Sigmoid colon (tissue), 7 donors: ENCODE measurements at regions of chr20 and their contacts with region 1.

Region 1: GRCh38 chr20:4108495-4109306 is 93.3 kb upstream of the RNF24 start:
- DNase-seq: peak; percentile 79
- H3K4me3 ChIP-seq: no peak overlapping the region
- H3K27ac ChIP-seq: no peak overlapping the region
- H3K4me1 ChIP-seq: peaks cover 0 to 13% (median 0%) of the 10 kb centered on the region in 4 donors
- H3K27me3 ChIP-seq: peaks cover 0 to 2% (median 0%) of the 10 kb centered on the region in 3 donors
- CTCF ChIP-seq: peak; percentile 94 to 96 (median 94)
- EP300 ChIP-seq: no peak
- POLR2A ChIP-seq: no peak

Region 2: GRCh38 chr20:4435225-4435624 is 326.5 kb after region 1 on chr20:
- intact Hi-C with region 1: no loop called
- DNase-seq: no peak
- H3K4me3 ChIP-seq: no peak overlapping the region
- H3K27ac ChIP-seq: no peak overlapping the region
- H3K4me1 ChIP-seq: peaks cover 0 to 6% (median 0%) of the 10 kb centered on the region in 4 donors
- H3K27me3 ChIP-seq: no peaks in the 10 kb centered on the region
- CTCF ChIP-seq: no peak
- EP300 ChIP-seq: no peak
- POLR2A ChIP-seq: no peak

Region 3: DNA sequence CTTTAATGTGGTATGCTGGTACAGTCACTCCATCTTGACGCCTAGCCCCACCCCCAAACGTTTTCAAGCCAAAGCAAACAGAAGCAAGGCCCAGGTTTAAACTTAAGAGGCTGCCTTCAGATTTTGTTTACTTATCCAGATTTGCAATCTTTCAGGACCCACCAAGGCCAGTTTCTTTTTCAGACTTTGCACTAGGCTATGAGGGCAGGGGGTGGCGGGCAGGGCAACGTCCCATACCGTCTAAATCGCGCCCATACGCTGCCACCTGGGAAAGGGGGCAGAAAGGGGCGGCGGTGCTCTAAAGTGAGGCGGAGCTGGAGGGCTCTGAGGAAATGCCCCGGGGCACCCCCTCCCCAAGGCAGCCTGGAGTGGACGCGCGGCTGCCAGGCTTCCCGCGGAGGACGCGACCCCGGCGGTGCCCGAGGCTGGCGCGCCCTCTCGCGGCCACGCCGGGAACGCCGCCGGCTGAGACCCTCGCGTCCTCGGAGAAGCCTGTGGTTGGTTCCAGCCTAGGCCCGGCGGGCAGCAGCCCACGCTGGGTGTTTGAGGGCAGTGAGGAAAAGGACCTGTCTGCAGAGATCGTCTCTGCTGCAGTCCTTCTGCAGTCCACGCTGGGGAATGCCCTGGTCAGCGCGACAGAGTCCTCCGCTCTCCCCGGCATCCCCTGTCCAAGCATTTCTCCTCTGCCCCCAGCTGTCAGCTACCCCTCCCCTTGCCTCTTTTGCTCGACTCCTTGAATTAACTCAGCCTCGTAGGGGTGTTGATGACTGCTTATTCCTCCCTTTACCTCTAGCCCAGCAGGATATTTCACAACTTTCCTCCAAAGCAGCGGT is 483.8 kb after region 1 on chr20:
- intact Hi-C with region 1: loop called (anchors 10 kb)
- DNase-seq: no peak
- H3K4me3 ChIP-seq: peak overlapping the region; percentile 22 to 45 (median 43)
- H3K27ac ChIP-seq: no peak overlapping the region
- H3K4me1 ChIP-seq: peaks cover 0 to 26% (median 22%) of the 10 kb centered on the region in 4 donors
- H3K27me3 ChIP-seq: no peaks in the 10 kb centered on the region
- CTCF ChIP-seq: peak; percentile 60 to 98 (median 80)
- EP300 ChIP-seq: no peak
- POLR2A ChIP-seq: no peak